B cell (primary cell): ENCODE measurements at regions of chr22 and their contacts with region 1.

Region 1: DNA sequence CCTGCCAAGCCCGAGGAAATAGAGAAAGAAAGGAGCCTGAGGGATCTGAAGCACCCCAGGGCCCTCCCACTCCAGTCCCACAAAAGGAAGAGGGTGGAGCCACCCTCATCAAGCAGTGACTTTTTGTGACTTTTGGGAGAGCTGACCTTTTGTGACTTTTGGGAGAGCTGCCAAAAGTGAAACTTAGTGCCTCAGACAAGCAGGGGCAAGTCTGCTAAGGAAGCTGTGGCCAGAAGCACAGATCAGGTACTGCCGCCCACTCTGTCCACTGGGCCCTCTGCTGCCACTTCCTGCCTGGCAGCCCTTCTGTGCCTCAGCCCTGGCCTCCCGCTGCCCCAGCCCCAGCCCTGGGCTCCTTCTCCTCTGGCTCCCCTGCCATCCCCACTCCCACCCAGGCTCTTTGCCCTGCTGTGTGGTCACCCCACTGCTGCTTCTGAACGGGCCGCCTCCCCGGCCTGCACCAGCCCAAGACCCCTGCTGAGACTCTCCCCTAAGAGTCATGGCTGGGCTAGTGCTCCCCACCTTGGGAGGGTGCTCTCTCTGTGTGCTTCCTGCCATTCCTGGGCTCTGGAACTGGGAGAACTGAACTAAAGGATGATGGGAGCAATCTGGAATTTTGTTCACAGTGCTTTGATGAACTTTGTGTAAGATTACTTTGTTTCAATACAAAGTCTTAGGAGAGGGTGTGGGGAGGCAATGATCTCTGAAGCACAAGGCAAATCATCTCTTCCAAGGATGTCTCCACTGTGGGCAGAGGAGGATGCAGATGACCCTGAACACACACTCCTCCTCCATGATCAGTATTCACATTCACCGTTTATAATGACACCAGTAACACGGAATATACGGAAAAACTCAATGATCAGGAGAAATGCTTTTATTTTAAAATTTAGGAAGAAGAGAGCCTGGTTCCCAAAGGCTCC is at the start of gene APOBEC3H:
- DNase-seq: no peak
- ATAC-seq: no peak
- H3K4me3 ChIP-seq: peak within 1 kb of the TSS in 1 of 5 experiments; percentile 10
- H3K4me3 Mint-ChIP-seq: peak within 1 kb of the TSS; percentile 72
- H3K27ac ChIP-seq: peak within 1 kb of the TSS; percentile 95 to 98
- H3K27ac Mint-ChIP-seq: peak within 1 kb of the TSS; percentile 98
- H3K4me1 ChIP-seq: peaks cover 59 to 60% of the 10 kb centered on the region in 2 donors
- H3K4me1 Mint-ChIP-seq: peaks cover 63% of the 10 kb centered on the region
- H3K27me3 ChIP-seq: no peaks in the 10 kb centered on the region
- H3K27me3 Mint-ChIP-seq: no peaks in the 10 kb centered on the region
- CTCF ChIP-seq: no peak
- total RNA-seq, gene APOBEC3H: 0.59 and 1.0 TPM in 2 replicates

Region 2: GRCh38 chr22:39068033-39068791 is 29.1 kb before region 1 on chr22:
- CTCF ChIA-PET with region 1: interaction called, 5 read pairs
- POLR2A ChIA-PET with region 1: interaction called, 13 read pairs
- intact Hi-C with region 1: loop called (anchors 2 kb)
- DNase-seq: peak; percentile 42
- ATAC-seq: no peak
- H3K4me3 ChIP-seq: peak overlapping the region; percentile 50 to 99 (median 96)
- H3K4me3 Mint-ChIP-seq: no peak overlapping the region
- H3K27ac ChIP-seq: peak overlapping the region; percentile 97 to 98
- H3K27ac Mint-ChIP-seq: no peak overlapping the region
- H3K4me1 ChIP-seq: peaks cover 70 to 95% of the 10 kb centered on the region in 2 donors
- H3K4me1 Mint-ChIP-seq: peaks cover 45% of the 10 kb centered on the region
- H3K27me3 ChIP-seq: no peaks in the 10 kb centered on the region
- H3K27me3 Mint-ChIP-seq: no peaks in the 10 kb centered on the region
- CTCF ChIP-seq: peak; percentile 54

Region 3: GRCh38 chr22:39073941-39074340 is 23.4 kb before region 1 on chr22:
- CTCF ChIA-PET with region 1: interaction called, 5 read pairs
- POLR2A ChIA-PET with region 1: interaction called, 13 read pairs
- intact Hi-C with region 1: no loop called
- DNase-seq: no peak
- ATAC-seq: no peak
- H3K4me3 ChIP-seq: no peak overlapping the region
- H3K4me3 Mint-ChIP-seq: peak overlapping the region; percentile 64
- H3K27ac ChIP-seq: peak overlapping the region; percentile 88 to 89
- H3K27ac Mint-ChIP-seq: peak overlapping the region; percentile 92
- H3K4me1 ChIP-seq: peaks cover 60 to 83% of the 10 kb centered on the region in 2 donors
- H3K4me1 Mint-ChIP-seq: peaks cover 61% of the 10 kb centered on the region
- H3K27me3 ChIP-seq: no peaks in the 10 kb centered on the region
- H3K27me3 Mint-ChIP-seq: no peaks in the 10 kb centered on the region
- CTCF ChIP-seq: no peak

Region 4: GRCh38 chr22:39080052-39080762 is 17.2 kb before region 1 on chr22:
- CTCF ChIA-PET with region 1: interaction called, 7 read pairs
- POLR2A ChIA-PET with region 1: interaction called, 13 read pairs
- intact Hi-C with region 1: no loop called
- DNase-seq: peak; percentile 72
- ATAC-seq: peak; percentile 14
- H3K4me3 ChIP-seq: no peak overlapping the region
- H3K4me3 Mint-ChIP-seq: peak overlapping the region; percentile 68
- H3K27ac ChIP-seq: peak overlapping the region; percentile 63 to 72
- H3K27ac Mint-ChIP-seq: peak overlapping the region; percentile 88
- H3K4me1 ChIP-seq: peaks cover 31 to 52% of the 10 kb centered on the region in 2 donors
- H3K4me1 Mint-ChIP-seq: peaks cover 48% of the 10 kb centered on the region
- H3K27me3 ChIP-seq: no peaks in the 10 kb centered on the region
- H3K27me3 Mint-ChIP-seq: no peaks in the 10 kb centered on the region
- CTCF ChIP-seq: no peak

Region 5: GRCh38 chr22:39117585-39118191 is 20.3 kb after region 1 on chr22:
- CTCF ChIA-PET with region 1: interaction called, 16 read pairs
- POLR2A ChIA-PET with region 1: interaction called, 10 read pairs
- intact Hi-C with region 1: loop called (anchors 2 kb)
- DNase-seq: peak; percentile 83
- ATAC-seq: peak; percentile 56
- H3K4me3 ChIP-seq: no peak overlapping the region
- H3K4me3 Mint-ChIP-seq: peak overlapping the region; percentile 61
- H3K27ac ChIP-seq: peak overlapping the region; percentile 1 to 11
- H3K27ac Mint-ChIP-seq: peak overlapping the region; percentile 68
- H3K4me1 ChIP-seq: peaks cover 40 to 43% of the 10 kb centered on the region in 2 donors
- H3K4me1 Mint-ChIP-seq: peaks cover 46% of the 10 kb centered on the region
- H3K27me3 ChIP-seq: no peaks in the 10 kb centered on the region
- H3K27me3 Mint-ChIP-seq: no peaks in the 10 kb centered on the region
- CTCF ChIP-seq: peak; percentile 78

Region 6: DNA sequence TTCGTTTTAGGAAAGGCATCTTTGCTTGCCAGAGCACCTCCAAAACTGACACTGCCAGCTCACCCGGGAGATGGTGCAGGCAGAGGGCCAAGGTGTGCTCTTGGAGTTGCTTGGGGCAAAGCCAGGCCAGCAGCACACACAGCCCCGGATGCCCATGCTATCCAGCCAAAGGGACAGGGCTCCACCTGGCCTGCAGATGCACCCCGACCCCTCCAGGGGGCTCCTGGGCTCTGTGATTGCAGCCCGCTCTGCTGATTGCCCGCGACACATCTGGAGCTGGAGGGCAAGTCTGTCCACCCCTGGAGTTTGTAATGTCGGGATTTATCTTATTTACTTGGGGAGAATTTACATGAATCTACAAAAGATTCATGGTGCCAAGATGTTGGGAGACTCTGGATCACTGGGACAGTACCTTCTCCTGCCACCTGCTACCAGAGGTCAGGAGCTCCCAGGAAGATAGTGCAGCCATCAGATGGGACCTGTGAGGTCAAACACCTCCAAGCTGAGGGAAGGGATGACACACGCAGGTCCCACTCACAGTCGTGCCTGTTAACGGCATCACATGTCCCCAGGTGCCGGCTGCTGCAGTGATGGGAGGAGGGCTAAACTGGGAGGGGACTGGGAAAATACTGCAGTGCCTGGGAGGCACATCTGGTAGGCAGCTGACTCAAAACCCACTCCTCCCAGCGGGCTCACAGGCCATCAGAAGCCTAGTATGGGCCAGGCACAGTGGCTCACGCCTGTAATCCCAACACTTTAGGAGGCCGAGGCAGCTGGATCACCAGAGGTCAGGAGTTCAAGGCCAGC is 37.9 kb after region 1 on chr22:
- CTCF ChIA-PET with region 1: no interaction called
- POLR2A ChIA-PET with region 1: no interaction called
- intact Hi-C with region 1: no loop called
- DNase-seq: peak; percentile 51
- ATAC-seq: peak; percentile 74
- H3K4me3 ChIP-seq: no peak overlapping the region
- H3K4me3 Mint-ChIP-seq: no peak overlapping the region
- H3K27ac ChIP-seq: no peak overlapping the region
- H3K27ac Mint-ChIP-seq: no peak overlapping the region
- H3K4me1 ChIP-seq: no peaks in the 10 kb centered on the region
- H3K4me1 Mint-ChIP-seq: peaks cover 1% of the 10 kb centered on the region
- H3K27me3 ChIP-seq: no peaks in the 10 kb centered on the region
- H3K27me3 Mint-ChIP-seq: no peaks in the 10 kb centered on the region
- CTCF ChIP-seq: peak; percentile 58

Region 7: GRCh38 chr22:39205338-39206021 is 108.1 kb after region 1 on chr22:
- CTCF ChIA-PET with region 1: no interaction called
- POLR2A ChIA-PET with region 1: no interaction called
- intact Hi-C with region 1: no loop called
- DNase-seq: no peak
- ATAC-seq: peak; percentile 31
- H3K4me3 ChIP-seq: no peak overlapping the region
- H3K4me3 Mint-ChIP-seq: peak overlapping the region; percentile 16
- H3K27ac ChIP-seq: no peak overlapping the region
- H3K27ac Mint-ChIP-seq: no peak overlapping the region
- H3K4me1 ChIP-seq: no peaks in the 10 kb centered on the region
- H3K4me1 Mint-ChIP-seq: peaks cover 11% of the 10 kb centered on the region
- H3K27me3 ChIP-seq: peaks cover 0 to 8% (median 0%) of the 10 kb centered on the region in 4 experiments
- H3K27me3 Mint-ChIP-seq: peaks cover 21% of the 10 kb centered on the region
- CTCF ChIP-seq: no peak

Region 8: GRCh38 chr22:39236321-39237317 is 139.3 kb after region 1 on chr22:
- CTCF ChIA-PET with region 1: no interaction called
- POLR2A ChIA-PET with region 1: no interaction called
- intact Hi-C with region 1: no loop called
- DNase-seq: peak; percentile 70
- ATAC-seq: peak; percentile 84
- H3K4me3 ChIP-seq: no peak overlapping the region
- H3K4me3 Mint-ChIP-seq: peak overlapping the region; percentile 58
- H3K27ac ChIP-seq: no peak overlapping the region
- H3K27ac Mint-ChIP-seq: no peak overlapping the region
- H3K4me1 ChIP-seq: peaks cover 45% of the 10 kb centered on the region in 2 donors
- H3K4me1 Mint-ChIP-seq: peaks cover 36% of the 10 kb centered on the region
- H3K27me3 ChIP-seq: peaks cover 0 to 94% (median 43%) of the 10 kb centered on the region in 4 experiments
- H3K27me3 Mint-ChIP-seq: peaks cover 86% of the 10 kb centered on the region
- CTCF ChIP-seq: no peak